ENCODE measurements at regions of chr3 and their contacts with region 1.

Region 1: DNA sequence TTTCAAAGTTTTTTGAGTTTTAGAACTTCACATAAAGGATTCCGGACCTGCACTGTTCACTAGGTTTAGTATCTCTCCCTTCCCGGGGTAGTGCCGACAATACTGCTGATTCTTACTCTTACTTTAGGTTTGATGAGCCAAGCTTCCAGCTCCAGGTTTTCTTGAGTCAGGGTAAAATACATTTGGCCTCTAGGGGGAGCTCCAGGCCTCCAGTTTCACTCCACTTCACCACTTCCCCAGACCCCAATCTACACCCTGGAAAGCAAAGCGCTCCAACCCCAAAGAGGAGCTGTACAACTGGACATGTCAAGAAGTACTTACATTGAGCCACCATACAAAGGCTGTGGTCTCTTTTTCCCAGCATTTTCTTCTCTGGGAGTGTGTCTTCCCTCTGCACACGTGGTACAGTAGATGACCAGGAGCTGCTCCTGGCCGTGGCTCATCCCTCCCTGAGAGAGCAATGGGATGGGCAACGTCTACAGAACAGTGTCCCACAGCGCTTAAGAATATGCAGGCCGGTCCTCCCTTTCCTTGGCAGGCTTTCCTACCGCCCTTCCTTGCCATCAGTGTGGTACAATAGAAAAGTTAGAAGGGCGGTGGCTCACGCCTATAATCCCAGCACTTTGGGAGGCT is 93.9 kb upstream of the CCDC80 start:
- DNase-seq: peak; percentile 47 to 71 (median 66)
- H3K4me3 ChIP-seq: no peak overlapping the region
- H3K4me3 Mint-ChIP-seq: no peak overlapping the region
- H3K27ac ChIP-seq: no peak overlapping the region
- H3K27ac Mint-ChIP-seq: peak overlapping the region in 1 of 8 donors; percentile 59
- H3K4me1 ChIP-seq: peaks cover 45% of the 10 kb centered on the region
- H3K4me1 Mint-ChIP-seq: peaks cover 34 to 47% (median 45%) of the 10 kb centered on the region in 3 donors
- H3K27me3 ChIP-seq: no peaks in the 10 kb centered on the region
- H3K27me3 Mint-ChIP-seq: peaks cover 0 to 1% of the 10 kb centered on the region in 2 donors

Region 2: GRCh38 chr3:112333002-112333380 is 401.8 kb before region 1 on chr3 and contains the start of gene CD200:
- CTCF ChIA-PET with region 1: no interaction called
- POLR2A ChIA-PET with region 1: no interaction called
- DNase-seq: peak; percentile 8 to 51 (median 26)
- H3K4me3 ChIP-seq: peak within 1 kb of the TSS; percentile 69
- H3K4me3 Mint-ChIP-seq: peak within 1 kb of the TSS; percentile 84 to 93 (median 89)
- H3K27ac ChIP-seq: no peak within 1 kb of the TSS
- H3K27ac Mint-ChIP-seq: peak within 1 kb of the TSS in 6 of 8 donors; percentile 5 to 49 (median 34)
- H3K4me1 ChIP-seq: peaks cover 5% of the 10 kb centered on the region
- H3K4me1 Mint-ChIP-seq: peaks cover 21 to 46% (median 23%) of the 10 kb centered on the region in 3 donors
- H3K27me3 ChIP-seq: no peaks in the 10 kb centered on the region
- H3K27me3 Mint-ChIP-seq: peaks cover 5 to 12% of the 10 kb centered on the region in 2 donors
- total RNA-seq, gene CD200: 17.9 to 18.3 TPM

Region 3: GRCh38 chr3:112642912-112643506 is 91.8 kb before region 1 on chr3:
- CTCF ChIA-PET with region 1: interaction called, 29 read pairs
- POLR2A ChIA-PET with region 1: no interaction called
- DNase-seq: peak; percentile 65 to 87 (median 73)
- H3K4me3 ChIP-seq: peak overlapping the region; percentile 34
- H3K4me3 Mint-ChIP-seq: peak overlapping the region; percentile 14 to 85 (median 77)
- H3K27ac ChIP-seq: no peak overlapping the region
- H3K27ac Mint-ChIP-seq: peak overlapping the region in 6 of 8 donors; percentile 9 to 81 (median 52)
- H3K4me1 ChIP-seq: peaks cover 10% of the 10 kb centered on the region
- H3K4me1 Mint-ChIP-seq: peaks cover 18 to 24% (median 23%) of the 10 kb centered on the region in 3 donors
- H3K27me3 ChIP-seq: no peaks in the 10 kb centered on the region
- H3K27me3 Mint-ChIP-seq: no peaks in the 10 kb centered on the region

Region 4: GRCh38 chr3:112746675-112747280 is 11.9 kb after region 1 on chr3:
- CTCF ChIA-PET with region 1: interaction called, 22 read pairs
- POLR2A ChIA-PET with region 1: no interaction called
- DNase-seq: no peak
- H3K4me3 ChIP-seq: no peak overlapping the region
- H3K4me3 Mint-ChIP-seq: no peak overlapping the region
- H3K27ac ChIP-seq: no peak overlapping the region
- H3K27ac Mint-ChIP-seq: peak overlapping the region in 1 of 8 donors; percentile 3
- H3K4me1 ChIP-seq: peaks cover 4% of the 10 kb centered on the region
- H3K4me1 Mint-ChIP-seq: peaks cover 6 to 36% (median 16%) of the 10 kb centered on the region in 3 donors
- H3K27me3 ChIP-seq: no peaks in the 10 kb centered on the region
- H3K27me3 Mint-ChIP-seq: no peaks in the 10 kb centered on the region

Region 5: GRCh38 chr3:112979240-112979832 is 244.5 kb after region 1 on chr3:
- CTCF ChIA-PET with region 1: interaction called, 53 read pairs
- POLR2A ChIA-PET with region 1: interaction called, 7 read pairs
- DNase-seq: peak in 2 of 5 donors; percentile 47 to 57
- H3K4me3 ChIP-seq: no peak overlapping the region
- H3K4me3 Mint-ChIP-seq: peak overlapping the region in 1 of 7 donors; percentile 49
- H3K27ac ChIP-seq: no peak overlapping the region
- H3K27ac Mint-ChIP-seq: peak overlapping the region in 1 of 8 donors; percentile 5
- H3K4me1 ChIP-seq: peaks cover 52% of the 10 kb centered on the region
- H3K4me1 Mint-ChIP-seq: peaks cover 48 to 75% (median 68%) of the 10 kb centered on the region in 3 donors
- H3K27me3 ChIP-seq: no peaks in the 10 kb centered on the region
- H3K27me3 Mint-ChIP-seq: no peaks in the 10 kb centered on the region

Region 6: GRCh38 chr3:113019182-113020137 is 284.6 kb after region 1 on chr3:
- CTCF ChIA-PET with region 1: interaction called, 13 read pairs
- POLR2A ChIA-PET with region 1: interaction called, 4 read pairs
- DNase-seq: peak; percentile 78 to 86 (median 82)
- H3K4me3 ChIP-seq: peak overlapping the region; percentile 97
- H3K4me3 Mint-ChIP-seq: peak overlapping the region; percentile 90 to 99 (median 95)
- H3K27ac ChIP-seq: peak overlapping the region; percentile 85
- H3K27ac Mint-ChIP-seq: peak overlapping the region; percentile 89 to 99 (median 97)
- H3K4me1 ChIP-seq: peaks cover 38% of the 10 kb centered on the region
- H3K4me1 Mint-ChIP-seq: peaks cover 48 to 69% (median 68%) of the 10 kb centered on the region in 3 donors
- H3K27me3 ChIP-seq: no peaks in the 10 kb centered on the region
- H3K27me3 Mint-ChIP-seq: no peaks in the 10 kb centered on the region

Measured in CD8-positive, alpha-beta memory T cell (primary cell).